ENCODE measurements at regions of chr12 and their contacts with region 1.

Region 1: DNA sequence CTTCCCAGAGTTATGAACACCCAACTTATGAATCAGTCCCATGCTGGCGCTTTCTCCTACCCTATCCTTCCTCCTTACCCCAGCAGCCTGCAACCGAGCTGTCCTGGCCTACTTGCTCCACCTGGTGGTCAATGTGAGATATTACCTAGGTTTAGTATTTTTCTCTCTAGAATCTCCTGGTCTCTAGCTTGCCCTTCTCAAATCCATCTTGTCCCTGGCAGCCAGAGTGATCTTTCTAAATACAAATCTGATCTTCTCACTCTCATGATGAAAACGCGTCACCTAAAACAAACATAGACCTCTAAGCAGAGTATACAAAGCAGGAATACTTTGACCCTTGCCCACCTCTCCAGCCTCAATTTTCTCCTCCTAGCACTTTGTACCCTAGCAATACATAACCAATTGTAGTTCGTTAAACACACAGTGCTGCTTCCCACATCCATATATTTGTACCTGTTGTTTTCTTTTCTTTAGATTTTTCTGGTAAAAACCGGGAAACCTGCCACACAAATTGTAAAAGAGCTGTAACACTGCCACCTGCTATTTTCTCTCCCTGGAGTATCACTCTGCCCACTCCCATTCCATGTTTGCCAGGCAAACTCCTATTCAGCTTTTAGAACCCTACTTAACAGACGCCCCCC is 20.0 kb upstream of the TCP11L2 start:
- DNase-seq: peak; percentile 30
- ATAC-seq: peak; percentile 95
- H3K4me3 Mint-ChIP-seq: no peak overlapping the region
- H3K27ac Mint-ChIP-seq: no peak overlapping the region
- H3K4me1 Mint-ChIP-seq: no peaks in the 10 kb centered on the region
- H3K27me3 Mint-ChIP-seq: no peaks in the 10 kb centered on the region
- CTCF ChIP-seq: peak; percentile 72

Region 2: GRCh38 chr12:106254724-106255123 is 27.9 kb before region 1 on chr12:
- CTCF ChIA-PET with region 1: interaction called, 13 read pairs
- POLR2A ChIA-PET with region 1: no interaction called
- DNase-seq: peak; percentile 36
- ATAC-seq: peak; percentile 89
- H3K4me3 Mint-ChIP-seq: no peak overlapping the region
- H3K27ac Mint-ChIP-seq: no peak overlapping the region
- H3K4me1 Mint-ChIP-seq: peaks cover 12% of the 10 kb centered on the region
- H3K27me3 Mint-ChIP-seq: no peaks in the 10 kb centered on the region
- CTCF ChIP-seq: no peak

Region 3: GRCh38 chr12:106302401-106303201 is 20.0 kb after region 1 on chr12 and contains the start of gene TCP11L2:
- CTCF ChIA-PET with region 1: interaction called, 12 read pairs
- POLR2A ChIA-PET with region 1: interaction called, 4 read pairs
- DNase-seq: peak; percentile 82
- ATAC-seq: peak; percentile 53
- H3K4me3 Mint-ChIP-seq: peak within 1 kb of the TSS; percentile 86
- H3K27ac Mint-ChIP-seq: peak within 1 kb of the TSS; percentile 99
- H3K4me1 Mint-ChIP-seq: peaks cover 35% of the 10 kb centered on the region
- H3K27me3 Mint-ChIP-seq: no peaks in the 10 kb centered on the region
- CTCF ChIP-seq: no peak
- total RNA-seq, gene TCP11L2: 11.9 to 12.8 TPM (median 12.3 TPM) in 3 replicates

Measured in WTC11 (cell line).